CD4-positive, alpha-beta T cell (primary cell): ENCODE measurements at regions of chr4 and their contacts with region 1.

Region 1: GRCh38 chr4:113952452-113953029 is 26.9 kb downstream of the ARSJ start:
- DNase-seq: peak in 4 of 14 experiments; percentile 6 to 49 (median 34)
- ATAC-seq: peak; percentile 71
- H3K4me3 ChIP-seq: no peak overlapping the region
- H3K4me3 Mint-ChIP-seq: no peak overlapping the region
- H3K27ac ChIP-seq: no peak overlapping the region
- H3K27ac Mint-ChIP-seq: no peak overlapping the region
- H3K4me1 ChIP-seq: peaks cover 2% of the 10 kb centered on the region
- H3K4me1 Mint-ChIP-seq: peaks cover 7% of the 10 kb centered on the region
- H3K27me3 ChIP-seq: no peaks in the 10 kb centered on the region
- H3K27me3 Mint-ChIP-seq: no peaks in the 10 kb centered on the region
- CTCF ChIP-seq: peak; percentile 73

Region 2: GRCh38 chr4:113008716-113009115 is 943.8 kb before region 1 on chr4:
- CTCF ChIA-PET with region 1: no interaction called
- POLR2A ChIA-PET with region 1: no interaction called
- intact Hi-C with region 1: no loop called
- DNase-seq: no peak
- ATAC-seq: no peak
- H3K4me3 ChIP-seq: no peak overlapping the region
- H3K4me3 Mint-ChIP-seq: no peak overlapping the region
- H3K27ac ChIP-seq: no peak overlapping the region
- H3K27ac Mint-ChIP-seq: no peak overlapping the region
- H3K4me1 ChIP-seq: no peaks in the 10 kb centered on the region
- H3K4me1 Mint-ChIP-seq: no peaks in the 10 kb centered on the region
- H3K27me3 ChIP-seq: no peaks in the 10 kb centered on the region
- H3K27me3 Mint-ChIP-seq: no peaks in the 10 kb centered on the region
- CTCF ChIP-seq: no peak

Region 3: GRCh38 chr4:114077610-114078009 is 125.1 kb after region 1 on chr4:
- CTCF ChIA-PET with region 1: no interaction called
- POLR2A ChIA-PET with region 1: no interaction called
- intact Hi-C with region 1: loop called in 1 of 2 experiments (anchors 10 kb)
- DNase-seq: no peak
- ATAC-seq: no peak
- H3K4me3 ChIP-seq: no peak overlapping the region
- H3K4me3 Mint-ChIP-seq: no peak overlapping the region
- H3K27ac ChIP-seq: no peak overlapping the region
- H3K27ac Mint-ChIP-seq: no peak overlapping the region
- H3K4me1 ChIP-seq: no peaks in the 10 kb centered on the region
- H3K4me1 Mint-ChIP-seq: no peaks in the 10 kb centered on the region
- H3K27me3 ChIP-seq: no peaks in the 10 kb centered on the region
- H3K27me3 Mint-ChIP-seq: no peaks in the 10 kb centered on the region
- CTCF ChIP-seq: no peak

Region 4: GRCh38 chr4:114180481-114180880 is 227.9 kb after region 1 on chr4:
- CTCF ChIA-PET with region 1: no interaction called
- POLR2A ChIA-PET with region 1: no interaction called
- intact Hi-C with region 1: loop called in 1 of 2 experiments (anchors 5 kb)
- DNase-seq: peak in 10 of 14 experiments; percentile 8 to 54 (median 28)
- ATAC-seq: no peak
- H3K4me3 ChIP-seq: no peak overlapping the region
- H3K4me3 Mint-ChIP-seq: no peak overlapping the region
- H3K27ac ChIP-seq: no peak overlapping the region
- H3K27ac Mint-ChIP-seq: no peak overlapping the region
- H3K4me1 ChIP-seq: no peaks in the 10 kb centered on the region
- H3K4me1 Mint-ChIP-seq: no peaks in the 10 kb centered on the region
- H3K27me3 ChIP-seq: no peaks in the 10 kb centered on the region
- H3K27me3 Mint-ChIP-seq: no peaks in the 10 kb centered on the region
- CTCF ChIP-seq: peak; percentile 41